Mammary epithelial cell (primary cell): ENCODE measurements at regions of chr16 and their contacts with region 1.

Region 1: GRCh38 chr16:67561824-67562525 is 351 bp upstream of the CTCF start:
- DNase-seq: peak; percentile 98
- H3K4me3 ChIP-seq: peak overlapping the region; percentile 66 to 90 (median 67)
- H3K27ac ChIP-seq: peak overlapping the region; percentile 60
- H3K4me1 ChIP-seq: peaks cover 20% of the 10 kb centered on the region
- H3K27me3 ChIP-seq: no peaks in the 10 kb centered on the region
- CTCF ChIP-seq: no peak

Region 2: DNA sequence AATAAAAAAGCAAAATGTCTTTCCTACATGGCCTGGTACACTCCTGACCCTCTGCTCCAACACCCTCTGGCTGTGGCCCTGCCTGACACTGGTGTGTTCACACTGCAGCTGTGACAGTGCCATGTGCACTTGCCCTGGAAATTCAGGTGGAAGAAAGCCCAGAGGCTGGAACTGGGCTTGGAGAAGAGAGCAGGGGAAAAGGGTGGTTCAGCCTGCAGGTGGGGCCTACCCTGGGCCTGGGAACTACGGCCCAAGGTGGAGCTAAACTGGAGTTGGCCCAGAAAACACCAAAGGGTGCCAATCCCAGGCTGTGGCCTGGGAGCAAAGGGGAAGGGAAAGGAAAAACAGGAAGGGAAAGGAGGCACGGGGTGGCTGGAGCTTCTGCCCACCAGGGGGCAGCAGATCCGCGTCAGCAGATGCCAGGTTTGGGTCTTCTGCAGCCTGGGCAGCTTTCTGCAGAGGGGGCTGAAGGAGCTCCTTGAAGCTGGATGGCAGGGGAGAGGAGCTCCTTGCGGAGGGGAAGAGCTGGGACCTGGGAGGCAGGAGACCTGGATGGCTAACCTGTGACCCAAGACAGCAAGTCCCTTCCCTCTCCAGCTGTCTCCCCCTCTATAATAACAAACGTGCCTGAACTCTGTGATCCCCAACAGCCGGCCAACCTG is 15.1 kb before region 1 on chr16:
- CTCF ChIA-PET with region 1: interaction called, 16 read pairs
- dilution Hi-C with region 1: no loop called
- in situ Hi-C with region 1: no loop called
- intact Hi-C with region 1: loop called (anchors 1 kb)
- DNase-seq: peak; percentile 45
- H3K4me3 ChIP-seq: no peak overlapping the region
- H3K27ac ChIP-seq: no peak overlapping the region
- H3K4me1 ChIP-seq: peaks cover 26% of the 10 kb centered on the region
- H3K27me3 ChIP-seq: no peaks in the 10 kb centered on the region
- CTCF ChIP-seq: peak; percentile 93 to 94

Region 3: GRCh38 chr16:67660564-67661028 is 98.6 kb after region 1 on chr16 and contains the start of gene PARD6A:
- CTCF ChIA-PET with region 1: interaction called, 30 read pairs
- dilution Hi-C with region 1: no loop called
- in situ Hi-C with region 1: loop called (anchors 10 to 25 kb)
- intact Hi-C with region 1: no loop called
- DNase-seq: peak; percentile 88
- H3K4me3 ChIP-seq: peak within 1 kb of the TSS; percentile 81 to 91 (median 82)
- H3K27ac ChIP-seq: peak within 1 kb of the TSS; percentile 84
- H3K4me1 ChIP-seq: peaks cover 18% of the 10 kb centered on the region
- H3K27me3 ChIP-seq: no peaks in the 10 kb centered on the region
- CTCF ChIP-seq: no peak
- total RNA-seq, gene PARD6A: 0.40 to 0.67 TPM

Region 4: DNA sequence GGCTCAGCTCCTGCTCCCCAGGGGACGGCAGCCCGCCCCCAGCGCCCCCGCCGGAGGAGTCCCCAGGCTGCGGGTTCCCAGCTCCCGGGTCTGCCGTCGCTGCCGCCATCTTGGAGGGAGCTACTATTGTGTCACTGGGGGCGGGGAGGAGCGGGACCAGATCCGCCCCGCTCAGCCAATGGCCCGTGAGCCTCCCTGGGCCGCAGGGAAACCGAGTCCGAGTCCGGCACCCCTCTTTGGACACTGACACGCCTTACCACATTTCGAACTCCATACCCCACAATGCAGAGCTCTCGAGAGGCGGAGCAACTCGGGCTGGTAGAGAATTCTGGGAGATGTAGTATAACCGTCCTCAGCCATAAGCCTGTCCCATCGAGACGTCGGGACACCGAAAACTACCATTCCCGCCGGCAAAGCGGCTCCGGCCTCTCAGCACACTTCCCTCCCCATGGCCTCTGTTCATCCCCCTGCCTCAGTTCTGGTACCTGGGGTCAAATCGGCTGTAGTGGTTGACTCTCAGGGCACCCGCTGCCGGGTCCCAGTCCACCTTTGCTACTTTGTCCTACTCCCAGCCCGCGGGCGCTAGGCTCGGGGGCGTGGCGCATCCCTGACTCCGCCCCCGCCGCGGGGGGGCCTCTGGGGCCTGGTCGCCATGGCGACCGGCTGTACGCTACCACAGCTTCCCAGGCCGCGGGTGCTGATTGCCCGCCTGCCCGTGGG is 244.6 kb after region 1 on chr16 and contains the starts of genes RANBP10 and TSNAXIP1:
- CTCF ChIA-PET with region 1: no interaction called
- dilution Hi-C with region 1: no loop called
- in situ Hi-C with region 1: no loop called
- intact Hi-C with region 1: loop called (anchors 1 kb)
- DNase-seq: peak; percentile 99
- H3K4me3 ChIP-seq: peak within 1 kb of the TSS; percentile 80 to 93 (median 86)
- H3K27ac ChIP-seq: peak within 1 kb of the TSS; percentile 78
- H3K4me1 ChIP-seq: peaks cover 15% of the 10 kb centered on the region
- H3K27me3 ChIP-seq: no peaks in the 10 kb centered on the region
- CTCF ChIP-seq: no peak
- total RNA-seq, gene RANBP10: 5.5 to 15.3 TPM
- total RNA-seq, gene TSNAXIP1: 0.33 to 0.99 TPM

Region 5: GRCh38 chr16:67961551-67962534 is 399.9 kb after region 1 on chr16:
- CTCF ChIA-PET with region 1: interaction called, 11 read pairs
- dilution Hi-C with region 1: no loop called
- in situ Hi-C with region 1: no loop called
- intact Hi-C with region 1: no loop called
- DNase-seq: peak; percentile 99
- H3K4me3 ChIP-seq: no peak overlapping the region
- H3K27ac ChIP-seq: peak overlapping the region; percentile 8
- H3K4me1 ChIP-seq: peaks cover 55% of the 10 kb centered on the region
- H3K27me3 ChIP-seq: no peaks in the 10 kb centered on the region
- CTCF ChIP-seq: no peak